ENCODE measurements at regions of chr12 and their contacts with region 1.

Region 1: GRCh38 chr12:54032627-54033100 is at the start of gene HOXC5:
- DNase-seq: peak; percentile 82
- H3K4me3 Mint-ChIP-seq: peak within 1 kb of the TSS; percentile 36
- H3K27ac Mint-ChIP-seq: no peak within 1 kb of the TSS
- H3K4me1 Mint-ChIP-seq: peaks cover 27% of the 10 kb centered on the region
- H3K27me3 Mint-ChIP-seq: peaks cover 73% of the 10 kb centered on the region
- total RNA-seq, gene HOXC5: not detected

Region 2: GRCh38 chr12:54005853-54006686 is 26.6 kb before region 1 on chr12:
- CTCF ChIA-PET with region 1: interaction called, 14 read pairs
- intact Hi-C with region 1: loop called (anchors 1 kb)
- DNase-seq: peak; percentile 91
- H3K4me3 Mint-ChIP-seq: peak overlapping the region; percentile 58
- H3K27ac Mint-ChIP-seq: no peak overlapping the region
- H3K4me1 Mint-ChIP-seq: peaks cover 26% of the 10 kb centered on the region
- H3K27me3 Mint-ChIP-seq: peaks cover 90% of the 10 kb centered on the region

Region 3: GRCh38 chr12:54082397-54082892 is 49.8 kb after region 1 on chr12:
- CTCF ChIA-PET with region 1: no interaction called
- intact Hi-C with region 1: loop called (anchors 5 kb)
- DNase-seq: peak; percentile 58
- H3K4me3 Mint-ChIP-seq: peak overlapping the region; percentile 75
- H3K27ac Mint-ChIP-seq: peak overlapping the region; percentile 10
- H3K4me1 Mint-ChIP-seq: peaks cover 23% of the 10 kb centered on the region
- H3K27me3 Mint-ChIP-seq: no peaks in the 10 kb centered on the region

Region 4: GRCh38 chr12:54173066-54173726 is 140.5 kb after region 1 on chr12:
- CTCF ChIA-PET with region 1: interaction called, 14 read pairs
- intact Hi-C with region 1: no loop called
- DNase-seq: peak; percentile 59
- H3K4me3 Mint-ChIP-seq: no peak overlapping the region
- H3K27ac Mint-ChIP-seq: no peak overlapping the region
- H3K4me1 Mint-ChIP-seq: peaks cover 5% of the 10 kb centered on the region
- H3K27me3 Mint-ChIP-seq: peaks cover 5% of the 10 kb centered on the region

Region 5: GRCh38 chr12:54191550-54192022 is 158.9 kb after region 1 on chr12:
- CTCF ChIA-PET with region 1: interaction called, 113 read pairs
- intact Hi-C with region 1: loop called (anchors 1 kb)
- DNase-seq: peak; percentile 84
- H3K4me3 Mint-ChIP-seq: no peak overlapping the region
- H3K27ac Mint-ChIP-seq: no peak overlapping the region
- H3K4me1 Mint-ChIP-seq: peaks cover 16% of the 10 kb centered on the region
- H3K27me3 Mint-ChIP-seq: peaks cover 35% of the 10 kb centered on the region

Region 6: GRCh38 chr12:54207484-54208294 is 175.0 kb after region 1 on chr12:
- CTCF ChIA-PET with region 1: interaction called, 53 read pairs
- intact Hi-C with region 1: loop called (anchors 1 kb)
- DNase-seq: peak; percentile 88
- H3K4me3 Mint-ChIP-seq: no peak overlapping the region
- H3K27ac Mint-ChIP-seq: no peak overlapping the region
- H3K4me1 Mint-ChIP-seq: no peaks in the 10 kb centered on the region
- H3K27me3 Mint-ChIP-seq: peaks cover 9% of the 10 kb centered on the region